ENCODE measurements at regions of chr9 and their contacts with region 1.

Region 1: GRCh38 chr9:98807070-98807810 is at the start of gene GALNT12:
- DNase-seq: peak; percentile 71
- H3K4me3 ChIP-seq: peak within 1 kb of the TSS; percentile 42 to 64 (median 62)
- H3K27ac ChIP-seq: peak within 1 kb of the TSS; percentile 83 to 90 (median 86)
- H3K4me1 ChIP-seq: peaks cover 0 to 68% (median 51%) of the 10 kb centered on the region in 4 donors
- H3K27me3 ChIP-seq: no peaks in the 10 kb centered on the region
- CTCF ChIP-seq: no peak
- EP300 ChIP-seq: no peak
- POLR2A ChIP-seq: no peak
- total RNA-seq, gene GALNT12: 11.5 to 18.9 (median 15.7) TPM

Region 2: DNA sequence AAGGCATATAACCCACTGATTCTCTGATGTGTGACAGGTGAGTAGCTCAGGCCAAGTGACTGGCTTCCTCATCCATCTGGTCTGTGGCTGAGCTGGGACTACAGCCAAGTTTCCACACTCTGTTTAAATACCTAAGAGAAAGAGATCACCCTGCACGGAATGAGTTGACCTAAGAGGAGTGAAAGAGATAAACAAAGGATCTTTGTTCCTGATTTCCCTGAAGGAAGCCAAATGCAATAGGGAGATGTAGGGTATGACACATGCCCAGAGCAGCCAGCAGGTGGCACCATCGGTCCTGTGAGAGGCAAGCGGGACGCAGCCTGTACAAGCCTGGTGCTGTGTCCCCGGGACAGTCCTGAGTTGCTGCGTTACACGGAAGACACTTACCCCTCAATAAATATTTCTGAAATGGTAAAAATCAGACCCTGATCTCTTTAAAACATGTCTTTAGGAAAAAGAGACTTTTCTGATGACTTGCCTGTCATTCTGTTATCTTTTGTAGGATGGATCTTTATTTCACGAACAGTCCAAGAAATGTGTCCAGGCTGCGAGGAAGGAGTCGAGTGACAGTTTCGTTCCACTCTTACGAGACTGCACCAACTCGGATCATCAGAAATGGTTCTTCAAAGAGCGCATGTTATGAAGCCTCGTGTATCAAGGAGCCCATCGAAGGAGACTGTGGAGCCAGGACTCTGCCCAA is 41.4 kb after region 1 on chr9:
- intact Hi-C with region 1: loop called (anchors 5 kb)
- DNase-seq: peak; percentile 97
- H3K4me3 ChIP-seq: peak overlapping the region; percentile 13 to 27 (median 24)
- H3K27ac ChIP-seq: peak overlapping the region; percentile 72 to 84 (median 79)
- H3K4me1 ChIP-seq: peaks cover 0 to 47% (median 37%) of the 10 kb centered on the region in 4 donors
- H3K27me3 ChIP-seq: no peaks in the 10 kb centered on the region
- CTCF ChIP-seq: peak; percentile 87 to 94 (median 90)
- EP300 ChIP-seq: peak in 1 of 4 donors; percentile 1
- POLR2A ChIP-seq: no peak

Region 3: DNA sequence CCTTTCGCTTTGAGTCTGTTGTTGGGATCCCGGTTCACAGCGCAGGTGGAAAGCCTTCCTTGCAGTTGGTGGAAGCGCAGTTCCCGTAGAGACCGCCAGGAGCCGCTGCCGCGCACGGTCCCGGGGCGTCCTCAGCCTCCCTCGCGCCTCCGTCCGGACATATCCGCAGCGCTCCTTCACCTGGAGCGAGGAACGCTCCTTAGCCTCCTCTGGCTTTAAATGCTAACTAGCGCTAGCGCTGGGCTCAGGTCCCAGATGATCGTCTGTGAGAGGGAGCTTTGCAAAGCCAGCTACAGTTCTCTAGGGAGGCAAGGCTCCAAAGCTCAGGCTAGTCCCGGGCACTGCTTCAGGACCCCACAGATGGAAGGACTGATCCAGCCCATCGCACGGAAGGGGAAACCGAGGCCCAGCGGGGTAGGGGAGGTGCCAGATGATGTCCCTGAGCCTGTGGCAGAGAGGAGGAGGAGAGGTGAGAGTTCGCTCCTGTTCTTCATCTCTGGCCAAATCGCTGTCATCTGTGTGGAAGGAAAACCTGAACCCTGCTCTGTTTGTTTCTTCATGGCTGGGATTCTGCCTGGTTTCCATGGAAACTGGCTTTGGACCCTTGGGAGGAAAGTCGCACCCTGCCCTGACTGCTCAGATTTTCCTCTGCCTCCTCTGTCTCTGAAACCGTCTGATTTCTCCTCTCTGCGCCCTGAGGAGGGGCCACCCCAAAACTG is 167.9 kb after region 1 on chr9:
- intact Hi-C with region 1: loop called (anchors 10 kb)
- DNase-seq: peak; percentile 95
- H3K4me3 ChIP-seq: peak overlapping the region; percentile 2 to 37 (median 32)
- H3K27ac ChIP-seq: peak overlapping the region; percentile 76 to 91 (median 80)
- H3K4me1 ChIP-seq: peaks cover 0 to 89% (median 76%) of the 10 kb centered on the region in 4 donors
- H3K27me3 ChIP-seq: no peaks in the 10 kb centered on the region
- CTCF ChIP-seq: peak; percentile 93 to 99 (median 97)
- EP300 ChIP-seq: no peak
- POLR2A ChIP-seq: no peak

Region 4: DNA sequence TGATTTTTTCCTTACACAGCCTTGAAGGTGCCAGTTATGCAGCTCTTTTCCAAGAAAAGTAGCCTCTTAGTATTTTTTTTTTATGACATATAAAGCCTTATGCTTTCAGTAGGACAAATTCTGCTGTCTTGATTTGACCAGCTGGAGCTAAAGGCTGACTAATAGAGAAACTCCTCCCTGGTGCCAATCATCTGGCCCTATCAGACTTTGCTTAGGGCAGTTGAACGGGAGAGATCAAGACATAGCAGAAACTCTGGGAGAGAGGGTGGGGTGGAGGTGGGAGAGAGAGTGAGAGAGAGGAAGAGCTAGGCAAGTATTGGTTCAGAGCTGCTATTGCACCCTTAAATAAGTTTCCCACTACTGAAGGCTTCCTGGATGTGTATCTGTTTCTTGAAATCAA is 515.1 kb after region 1 on chr9:
- intact Hi-C with region 1: no loop called
- DNase-seq: no peak
- H3K4me3 ChIP-seq: no peak overlapping the region
- H3K27ac ChIP-seq: no peak overlapping the region
- H3K4me1 ChIP-seq: no peaks in the 10 kb centered on the region
- H3K27me3 ChIP-seq: no peaks in the 10 kb centered on the region
- CTCF ChIP-seq: no peak
- EP300 ChIP-seq: no peak
- POLR2A ChIP-seq: no peak